MCF 10A (cell line): ENCODE measurements at regions of chr10 and their contacts with region 1.

Region 1: GRCh38 chr10:47454008-47454779 is 29.7 kb downstream of the ANXA8 start:
- DNase-seq: no peak
- H3K4me3 Mint-ChIP-seq: no peak overlapping the region
- H3K27ac Mint-ChIP-seq: no peak overlapping the region
- H3K4me1 Mint-ChIP-seq: peaks cover 19% of the 10 kb centered on the region
- H3K27me3 Mint-ChIP-seq: peaks cover 17% of the 10 kb centered on the region
- CTCF ChIP-seq: no peak

Region 2: DNA sequence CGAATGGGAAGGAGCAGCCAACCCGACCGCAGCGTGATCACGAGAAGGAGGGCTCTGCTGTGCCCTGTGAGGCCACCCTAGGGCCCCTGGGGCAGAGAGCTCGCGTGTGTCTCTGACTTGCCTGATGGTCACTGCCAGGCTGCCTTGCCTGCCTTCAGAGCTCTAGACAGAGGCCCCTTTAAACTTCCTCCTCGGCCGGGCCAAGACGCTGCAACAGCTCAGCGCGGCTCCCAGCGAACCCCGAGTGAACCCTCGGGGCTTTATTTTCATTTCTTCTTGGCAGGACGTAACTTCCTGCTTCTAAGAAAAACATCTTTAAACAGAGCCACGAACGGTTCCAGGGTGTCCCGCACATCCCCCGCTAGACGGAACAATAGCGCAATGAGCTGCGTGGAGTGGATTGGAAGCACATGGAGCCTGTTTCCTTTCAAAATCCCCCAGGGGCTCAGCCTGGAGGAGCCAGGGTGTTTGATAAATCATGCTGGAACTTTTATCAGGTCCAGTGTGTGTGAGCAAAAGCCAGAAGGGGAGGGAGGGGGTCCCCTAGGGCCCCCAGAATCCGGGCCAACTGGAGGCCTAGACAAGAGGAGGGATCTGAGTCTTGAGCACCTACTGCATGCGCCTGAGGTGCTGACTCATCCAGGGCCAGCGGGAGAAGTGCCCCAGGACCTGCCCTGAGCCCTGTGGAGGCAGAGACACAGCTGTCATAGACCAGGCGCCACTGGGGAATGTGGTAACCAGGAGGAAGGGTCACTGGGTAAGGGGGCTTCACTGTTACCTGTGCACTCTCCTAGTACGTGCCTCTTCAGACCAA is 288.3 kb before region 1 on chr10:
- CTCF ChIA-PET with region 1: no interaction called
- POLR2A ChIA-PET with region 1: no interaction called
- intact Hi-C with region 1: no loop called
- DNase-seq: peak; percentile 67
- H3K4me3 Mint-ChIP-seq: peak overlapping the region; percentile 36
- H3K27ac Mint-ChIP-seq: peak overlapping the region; percentile 77
- H3K4me1 Mint-ChIP-seq: peaks cover 48% of the 10 kb centered on the region
- H3K27me3 Mint-ChIP-seq: no peaks in the 10 kb centered on the region
- CTCF ChIP-seq: no peak

Region 3: GRCh38 chr10:47438857-47439474 is 15.2 kb before region 1 on chr10:
- CTCF ChIA-PET with region 1: interaction called, 11 read pairs
- POLR2A ChIA-PET with region 1: no interaction called
- intact Hi-C with region 1: no loop called
- DNase-seq: peak; percentile 76
- H3K4me3 Mint-ChIP-seq: no peak overlapping the region
- H3K27ac Mint-ChIP-seq: no peak overlapping the region
- H3K4me1 Mint-ChIP-seq: peaks cover 7% of the 10 kb centered on the region
- H3K27me3 Mint-ChIP-seq: no peaks in the 10 kb centered on the region
- CTCF ChIP-seq: peak; percentile 68